Caco-2 (cell line): ENCODE measurements at regions of chr11 and their contacts with region 1.

Region 1: DNA sequence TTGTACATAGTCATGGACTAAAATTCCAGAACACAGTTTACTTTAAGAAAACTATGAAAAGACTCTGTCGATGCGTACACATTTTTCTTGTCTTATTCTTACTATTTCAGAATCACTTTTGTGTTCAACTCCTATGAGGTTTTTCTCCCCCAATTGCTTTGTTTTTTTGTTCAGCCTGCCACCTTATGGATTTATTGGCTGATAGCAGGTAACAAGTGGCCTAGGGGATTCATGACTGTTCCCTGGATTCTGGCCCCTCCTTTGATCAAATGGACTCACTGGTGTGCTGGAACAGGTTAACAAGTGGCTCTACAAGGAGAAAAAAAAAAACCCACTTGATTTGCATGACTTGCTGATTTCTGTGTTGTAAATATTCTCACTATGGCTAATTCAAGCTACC is 10.6 kb downstream of the MMP20 start:
- DNase-seq: peak in 1 of 2 experiments; percentile 30
- H3K4me3 ChIP-seq: no peak overlapping the region
- H3K4me3 Mint-ChIP-seq: no peak overlapping the region
- H3K27ac Mint-ChIP-seq: no peak overlapping the region
- H3K4me1 ChIP-seq: peaks cover 28% of the 10 kb centered on the region
- H3K4me1 Mint-ChIP-seq: peaks cover 35% of the 10 kb centered on the region
- H3K27me3 ChIP-seq: no peaks in the 10 kb centered on the region
- H3K27me3 Mint-ChIP-seq: no peaks in the 10 kb centered on the region
- CTCF ChIP-seq: peak in 1 of 2 experiments; percentile 46

Region 2: DNA sequence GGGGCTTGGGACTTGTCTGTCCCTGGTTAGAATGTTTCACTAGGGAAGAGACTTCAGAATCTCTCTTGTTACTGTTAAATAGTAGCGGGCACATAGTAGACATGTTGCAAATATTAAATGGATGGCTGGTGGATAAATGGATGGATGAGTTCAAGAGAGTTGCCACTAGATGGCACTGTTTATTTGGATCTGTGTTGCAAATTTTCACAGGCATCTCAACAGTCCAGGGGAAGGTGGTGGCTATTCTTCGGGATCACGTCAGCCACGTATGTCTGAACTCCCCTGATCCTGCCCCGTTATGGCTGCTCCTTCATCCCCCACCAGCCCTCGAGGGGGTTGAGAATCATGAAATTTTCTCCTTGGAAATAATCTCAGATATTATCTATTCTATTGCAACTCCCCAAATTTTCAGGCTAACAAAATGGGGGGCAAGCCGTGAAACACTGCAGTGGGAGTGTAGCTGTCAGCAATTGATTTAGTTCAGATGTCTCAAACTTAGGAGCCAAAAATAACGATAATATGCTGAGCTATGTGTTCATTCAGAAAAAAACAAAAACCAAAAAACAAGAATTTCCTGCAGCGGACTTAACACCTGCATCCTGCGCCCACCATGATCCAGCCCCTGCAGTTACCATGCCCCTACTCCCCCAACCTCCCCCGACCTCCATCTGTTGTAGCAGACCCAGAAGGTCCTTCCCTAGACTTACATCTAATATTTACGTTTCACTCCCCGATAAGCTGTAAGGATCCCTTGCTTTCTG is 326.3 kb before region 1 on chr11:
- CTCF ChIA-PET with region 1: interaction called, 6 read pairs
- POLR2A ChIA-PET with region 1: no interaction called
- intact Hi-C with region 1: loop called (anchors 1 kb)
- DNase-seq: peak; percentile 66 to 78
- H3K4me3 ChIP-seq: no peak overlapping the region
- H3K4me3 Mint-ChIP-seq: peak overlapping the region; percentile 1
- H3K27ac Mint-ChIP-seq: no peak overlapping the region
- H3K4me1 ChIP-seq: peaks cover 12% of the 10 kb centered on the region
- H3K4me1 Mint-ChIP-seq: peaks cover 7% of the 10 kb centered on the region
- H3K27me3 ChIP-seq: no peaks in the 10 kb centered on the region
- H3K27me3 Mint-ChIP-seq: no peaks in the 10 kb centered on the region
- CTCF ChIP-seq: peak; percentile 84

Region 3: DNA sequence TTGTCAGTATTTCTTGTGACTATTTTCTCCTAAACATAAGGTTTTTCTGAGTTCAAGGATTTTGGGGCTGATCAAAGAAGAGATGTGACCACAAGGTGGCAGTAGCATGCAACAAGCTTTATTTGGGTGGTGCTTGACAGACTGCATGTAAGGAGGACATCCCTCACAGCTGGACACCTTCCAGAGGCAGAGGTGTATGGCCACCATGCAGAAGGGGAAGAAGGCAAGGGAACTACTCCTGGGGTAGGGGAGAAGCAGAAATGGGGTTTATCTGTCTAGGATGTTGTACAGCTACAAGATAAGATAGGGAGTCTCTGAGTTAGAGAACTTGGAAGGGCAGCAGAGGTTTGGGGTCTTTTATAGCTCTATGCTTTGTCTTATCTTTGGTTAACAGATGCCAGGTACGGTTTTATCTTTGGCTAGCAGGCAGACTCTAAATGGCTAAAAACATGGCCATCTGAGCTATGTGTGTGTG is 272.6 kb before region 1 on chr11:
- CTCF ChIA-PET with region 1: interaction called, 51 read pairs
- POLR2A ChIA-PET with region 1: interaction called, 3 read pairs
- intact Hi-C with region 1: loop called (anchors 1 kb)
- DNase-seq: peak; percentile 86 to 87
- H3K4me3 ChIP-seq: no peak overlapping the region
- H3K4me3 Mint-ChIP-seq: no peak overlapping the region
- H3K27ac Mint-ChIP-seq: no peak overlapping the region
- H3K4me1 ChIP-seq: peaks cover 4% of the 10 kb centered on the region; the same call in 1 of the 2 replicates
- H3K4me1 Mint-ChIP-seq: peaks cover 16% of the 10 kb centered on the region
- H3K27me3 ChIP-seq: no peaks in the 10 kb centered on the region
- H3K27me3 Mint-ChIP-seq: no peaks in the 10 kb centered on the region
- CTCF ChIP-seq: peak; percentile 92 to 95

Region 4: DNA sequence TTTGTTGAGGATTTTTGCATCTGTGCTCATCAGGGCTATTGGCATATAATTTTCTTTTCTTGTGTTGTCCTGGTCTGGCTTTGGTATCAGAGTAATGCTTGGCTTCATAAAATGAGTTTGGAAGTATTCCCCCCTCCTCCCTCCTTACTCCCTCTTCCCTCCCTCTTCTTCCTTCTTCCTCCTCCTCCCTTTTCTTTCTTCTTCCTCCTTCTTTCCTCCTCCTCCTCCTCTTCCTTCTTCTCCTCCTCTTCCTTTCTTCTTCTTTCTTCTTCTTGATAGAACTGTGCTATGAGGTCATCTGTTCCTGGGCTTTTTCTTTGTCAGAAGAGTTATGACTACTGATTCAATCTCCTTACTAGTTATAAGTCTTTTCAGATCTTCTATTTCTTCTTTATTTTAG is 257.4 kb before region 1 on chr11:
- CTCF ChIA-PET with region 1: no interaction called
- POLR2A ChIA-PET with region 1: no interaction called
- intact Hi-C with region 1: no loop called
- DNase-seq: no peak
- H3K4me3 ChIP-seq: no peak overlapping the region
- H3K4me3 Mint-ChIP-seq: no peak overlapping the region
- H3K27ac Mint-ChIP-seq: no peak overlapping the region
- H3K4me1 ChIP-seq: 0 out of 2 replicates have a peak, but pooled peaks cover 4% of the 10 kb centered on the region
- H3K4me1 Mint-ChIP-seq: peaks cover 11% of the 10 kb centered on the region
- H3K27me3 ChIP-seq: no peaks in the 10 kb centered on the region
- H3K27me3 Mint-ChIP-seq: no peaks in the 10 kb centered on the region
- CTCF ChIP-seq: no peak

Region 5: DNA sequence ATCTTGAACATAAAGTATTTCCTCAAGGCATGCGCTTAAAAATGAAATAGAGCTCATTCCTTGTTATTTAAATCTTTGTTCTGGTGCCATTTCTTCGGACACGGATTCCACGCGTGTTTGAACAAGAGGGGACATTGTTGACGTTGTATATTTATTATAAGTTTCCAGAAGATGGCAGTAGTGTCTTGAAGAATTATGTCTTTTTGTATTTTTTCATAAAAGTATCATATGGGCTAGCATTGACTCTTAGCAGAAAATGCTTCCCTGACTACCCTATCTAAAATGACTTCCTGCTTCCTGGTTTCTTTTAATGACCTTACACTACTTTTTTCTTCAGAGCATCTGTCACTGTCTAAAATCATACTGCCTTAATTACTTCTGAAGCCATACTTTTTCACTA is 247.1 kb before region 1 on chr11:
- CTCF ChIA-PET with region 1: interaction called, 10 read pairs
- POLR2A ChIA-PET with region 1: interaction called, 3 read pairs
- intact Hi-C with region 1: loop called (anchors 1 kb)
- DNase-seq: no peak
- H3K4me3 ChIP-seq: no peak overlapping the region
- H3K4me3 Mint-ChIP-seq: no peak overlapping the region
- H3K27ac Mint-ChIP-seq: no peak overlapping the region
- H3K4me1 ChIP-seq: no peaks in the 10 kb centered on the region
- H3K4me1 Mint-ChIP-seq: no peaks in the 10 kb centered on the region
- H3K27me3 ChIP-seq: no peaks in the 10 kb centered on the region
- H3K27me3 Mint-ChIP-seq: no peaks in the 10 kb centered on the region
- CTCF ChIP-seq: peak; percentile 25 to 46

Region 6: GRCh38 chr11:102451681-102452460 is 162.6 kb before region 1 on chr11:
- CTCF ChIA-PET with region 1: interaction called, 5 read pairs
- POLR2A ChIA-PET with region 1: no interaction called
- intact Hi-C with region 1: loop called (anchors 1 kb)
- DNase-seq: peak; percentile 81 to 87
- H3K4me3 ChIP-seq: peak overlapping the region; percentile 90
- H3K4me3 Mint-ChIP-seq: peak overlapping the region; percentile 99
- H3K27ac Mint-ChIP-seq: peak overlapping the region; percentile 98
- H3K4me1 ChIP-seq: peaks cover 55% of the 10 kb centered on the region
- H3K4me1 Mint-ChIP-seq: peaks cover 52% of the 10 kb centered on the region
- H3K27me3 ChIP-seq: no peaks in the 10 kb centered on the region
- H3K27me3 Mint-ChIP-seq: no peaks in the 10 kb centered on the region
- CTCF ChIP-seq: peak; percentile 24 to 51

Region 7: DNA sequence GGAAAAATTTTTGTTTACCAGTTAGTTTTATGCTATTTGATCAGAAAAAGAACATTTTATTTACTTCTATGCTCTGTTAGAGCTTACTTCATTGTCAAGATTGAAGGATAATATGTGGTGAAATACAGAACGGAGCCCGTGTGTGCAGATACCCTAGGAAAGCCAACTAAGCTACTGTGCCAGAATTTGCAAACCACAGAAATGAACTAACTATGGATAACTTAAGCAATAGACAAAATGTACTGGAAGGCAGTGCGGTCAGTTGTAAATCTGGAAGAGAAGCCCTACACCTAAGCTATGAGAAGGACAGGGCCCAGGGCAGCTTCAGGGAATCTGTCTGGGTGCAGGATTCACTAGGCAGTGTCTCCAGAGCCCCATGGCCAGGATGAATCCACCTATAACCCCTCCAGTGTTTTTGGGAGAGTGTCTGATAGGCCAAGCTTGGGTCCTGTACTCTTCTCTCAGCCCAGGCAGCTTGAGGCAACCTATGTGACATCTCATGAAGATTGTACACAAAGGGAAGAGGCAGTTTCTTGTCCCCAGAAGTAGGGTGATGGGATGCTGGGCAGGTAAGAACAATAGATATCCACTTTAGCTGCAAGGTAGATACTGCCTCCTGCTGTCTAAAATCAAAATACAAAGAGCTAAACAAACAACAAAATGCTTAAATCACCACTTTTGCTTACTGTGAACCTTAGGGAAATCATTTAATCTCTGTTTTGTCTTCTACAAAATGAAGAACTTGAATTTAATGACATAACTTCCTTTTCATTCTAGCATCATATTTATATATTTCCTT is 96.0 kb before region 1 on chr11:
- CTCF ChIA-PET with region 1: interaction called, 11 read pairs
- POLR2A ChIA-PET with region 1: no interaction called
- intact Hi-C with region 1: no loop called
- DNase-seq: no peak
- H3K4me3 ChIP-seq: no peak overlapping the region
- H3K4me3 Mint-ChIP-seq: no peak overlapping the region
- H3K27ac Mint-ChIP-seq: no peak overlapping the region
- H3K4me1 ChIP-seq: peaks cover 4% of the 10 kb centered on the region; the same call in 1 of the 2 replicates
- H3K4me1 Mint-ChIP-seq: peaks cover 8% of the 10 kb centered on the region
- H3K27me3 ChIP-seq: no peaks in the 10 kb centered on the region
- H3K27me3 Mint-ChIP-seq: no peaks in the 10 kb centered on the region
- CTCF ChIP-seq: peak in 1 of 2 experiments; percentile 9

Region 8: GRCh38 chr11:102599642-102600261 is 14.7 kb before region 1 on chr11:
- CTCF ChIA-PET with region 1: interaction called, 10 read pairs
- POLR2A ChIA-PET with region 1: no interaction called
- intact Hi-C with region 1: no loop called
- DNase-seq: peak; percentile 72 to 81
- H3K4me3 ChIP-seq: no peak overlapping the region
- H3K4me3 Mint-ChIP-seq: peak overlapping the region; percentile 61
- H3K27ac Mint-ChIP-seq: peak overlapping the region; percentile 79
- H3K4me1 ChIP-seq: peaks cover 73% of the 10 kb centered on the region
- H3K4me1 Mint-ChIP-seq: peaks cover 63% of the 10 kb centered on the region
- H3K27me3 ChIP-seq: no peaks in the 10 kb centered on the region
- H3K27me3 Mint-ChIP-seq: no peaks in the 10 kb centered on the region
- CTCF ChIP-seq: no peak

Region 9: DNA sequence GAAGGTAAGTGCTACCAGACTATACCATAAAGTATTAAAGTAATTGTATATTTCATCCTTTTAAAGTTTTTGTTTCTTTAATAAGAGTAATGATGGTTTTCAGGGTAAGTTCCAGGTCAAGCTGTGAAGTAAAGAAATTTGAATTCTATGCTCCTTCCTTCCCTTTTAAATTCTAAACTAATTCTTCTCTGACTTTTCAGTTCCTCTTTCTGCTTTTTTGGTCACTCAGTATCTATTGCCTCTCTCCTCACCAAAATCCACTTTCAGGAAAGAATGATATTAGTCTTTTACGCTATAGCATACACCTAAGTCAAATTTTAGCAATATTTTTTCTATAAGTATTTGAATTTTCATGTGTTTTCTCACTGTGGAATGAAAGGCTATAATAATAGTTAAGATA is 102.0 kb after region 1 on chr11:
- CTCF ChIA-PET with region 1: no interaction called
- POLR2A ChIA-PET with region 1: no interaction called
- intact Hi-C with region 1: no loop called
- DNase-seq: no peak
- H3K4me3 ChIP-seq: no peak overlapping the region
- H3K4me3 Mint-ChIP-seq: no peak overlapping the region
- H3K27ac Mint-ChIP-seq: no peak overlapping the region
- H3K4me1 ChIP-seq: no peaks in the 10 kb centered on the region
- H3K4me1 Mint-ChIP-seq: no peaks in the 10 kb centered on the region
- H3K27me3 ChIP-seq: no peaks in the 10 kb centered on the region
- H3K27me3 Mint-ChIP-seq: peaks cover 20% of the 10 kb centered on the region
- CTCF ChIP-seq: no peak